Gastrocnemius medialis (tissue), 4 donors: ENCODE measurements at regions of chr11 and their contacts with region 1.

Region 1: DNA sequence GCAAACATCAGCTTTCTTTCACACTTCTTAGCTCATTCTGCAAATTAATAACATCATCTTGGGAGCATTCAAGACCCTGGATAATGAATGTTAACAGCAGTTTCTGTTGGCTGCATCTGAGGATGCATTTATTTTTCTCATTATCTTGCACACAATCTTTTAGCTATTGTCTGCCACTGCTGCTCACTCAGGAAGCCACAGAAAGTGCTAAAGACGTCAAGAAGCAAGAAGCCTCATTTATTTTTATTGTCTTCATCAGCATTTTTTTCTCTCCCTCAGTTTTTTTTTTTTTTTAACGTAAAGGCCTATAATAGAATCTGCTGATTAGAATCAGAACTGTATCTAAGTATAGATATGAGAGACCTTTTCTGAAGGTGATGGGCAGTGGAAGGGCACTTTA is 1339.4 kb downstream of the FAM181B start:
- DNase-seq: no peak
- ATAC-seq: no peak
- H3K4me3 ChIP-seq: no peak overlapping the region
- H3K27ac ChIP-seq: no peak overlapping the region
- H3K4me1 ChIP-seq: no peaks in the 10 kb centered on the region
- H3K27me3 ChIP-seq: no peaks in the 10 kb centered on the region
- CTCF ChIP-seq: no peak
- POLR2A ChIP-seq: no peak

Region 2: GRCh38 chr11:81080476-81080875 is 313.8 kb before region 1 on chr11:
- in situ Hi-C with region 1: no loop called
- intact Hi-C with region 1: no loop called
- DNase-seq: no peak
- ATAC-seq: no peak
- H3K4me3 ChIP-seq: no peak overlapping the region
- H3K27ac ChIP-seq: no peak overlapping the region
- H3K4me1 ChIP-seq: no peaks in the 10 kb centered on the region
- H3K27me3 ChIP-seq: no peaks in the 10 kb centered on the region
- CTCF ChIP-seq: no peak
- POLR2A ChIP-seq: no peak

Region 3: DNA sequence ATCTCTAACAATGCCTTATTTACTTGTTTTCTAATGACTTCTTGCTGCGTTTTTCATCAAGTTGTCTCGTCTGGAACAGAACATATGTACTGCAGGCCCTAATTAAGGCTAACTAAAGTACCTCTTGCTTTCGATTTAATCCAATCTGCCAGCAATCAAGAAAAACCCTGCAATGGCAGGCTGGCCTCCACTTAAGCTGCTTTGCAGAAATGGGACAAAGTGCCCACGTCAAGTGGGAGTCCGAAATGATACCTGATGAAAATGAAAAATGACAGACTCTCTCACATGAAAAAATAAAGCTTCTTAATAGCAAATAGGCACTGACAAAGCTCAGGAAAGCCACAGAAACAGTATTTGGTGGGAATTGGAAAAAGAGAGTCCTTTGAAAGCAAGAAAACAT is 115.3 kb before region 1 on chr11:
- in situ Hi-C with region 1: no loop called
- intact Hi-C with region 1: no loop called
- DNase-seq: no peak
- ATAC-seq: no peak
- H3K4me3 ChIP-seq: no peak overlapping the region
- H3K27ac ChIP-seq: no peak overlapping the region
- H3K4me1 ChIP-seq: no peaks in the 10 kb centered on the region
- H3K27me3 ChIP-seq: no peaks in the 10 kb centered on the region
- CTCF ChIP-seq: no peak
- POLR2A ChIP-seq: no peak

Region 4: GRCh38 chr11:81359476-81359875 is 34.8 kb before region 1 on chr11:
- in situ Hi-C with region 1: no loop called
- intact Hi-C with region 1: no loop called
- DNase-seq: no peak
- ATAC-seq: no peak
- H3K4me3 ChIP-seq: no peak overlapping the region
- H3K27ac ChIP-seq: no peak overlapping the region
- H3K4me1 ChIP-seq: no peaks in the 10 kb centered on the region
- H3K27me3 ChIP-seq: no peaks in the 10 kb centered on the region
- CTCF ChIP-seq: no peak
- POLR2A ChIP-seq: no peak

Region 5: DNA sequence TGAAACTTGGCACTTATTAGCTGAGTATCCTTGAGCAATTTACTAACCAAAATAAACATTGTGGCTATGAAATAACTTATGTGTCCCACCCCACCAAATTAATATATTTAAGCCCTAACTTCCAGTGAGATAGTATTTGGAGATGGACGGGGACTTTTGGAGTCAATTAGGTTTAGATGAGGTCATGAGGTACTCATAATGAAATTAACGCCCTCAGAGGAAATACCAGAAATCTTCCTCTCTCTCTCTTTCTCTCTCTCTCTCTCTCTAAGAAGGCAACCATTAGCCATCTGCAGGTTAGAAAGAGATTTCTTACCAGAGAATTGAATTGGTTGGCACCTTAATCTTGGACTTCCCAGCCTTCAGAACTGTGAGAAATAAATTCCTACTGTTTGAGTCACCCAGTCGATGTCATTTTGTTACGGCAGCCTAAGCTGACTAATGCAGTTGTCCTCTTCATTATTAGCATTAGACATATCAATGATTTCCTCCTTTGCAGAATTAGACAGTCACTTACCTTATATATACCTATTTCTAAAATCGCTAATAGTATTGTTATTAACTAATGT is 55.4 kb after region 1 on chr11:
- in situ Hi-C with region 1: loop called in 1 of 4 experiments (anchors 10 kb)
- intact Hi-C with region 1: no loop called
- DNase-seq: no peak
- ATAC-seq: no peak
- H3K4me3 ChIP-seq: no peak overlapping the region
- H3K27ac ChIP-seq: no peak overlapping the region
- H3K4me1 ChIP-seq: no peaks in the 10 kb centered on the region
- H3K27me3 ChIP-seq: no peaks in the 10 kb centered on the region
- CTCF ChIP-seq: no peak
- POLR2A ChIP-seq: no peak

Region 6: DNA sequence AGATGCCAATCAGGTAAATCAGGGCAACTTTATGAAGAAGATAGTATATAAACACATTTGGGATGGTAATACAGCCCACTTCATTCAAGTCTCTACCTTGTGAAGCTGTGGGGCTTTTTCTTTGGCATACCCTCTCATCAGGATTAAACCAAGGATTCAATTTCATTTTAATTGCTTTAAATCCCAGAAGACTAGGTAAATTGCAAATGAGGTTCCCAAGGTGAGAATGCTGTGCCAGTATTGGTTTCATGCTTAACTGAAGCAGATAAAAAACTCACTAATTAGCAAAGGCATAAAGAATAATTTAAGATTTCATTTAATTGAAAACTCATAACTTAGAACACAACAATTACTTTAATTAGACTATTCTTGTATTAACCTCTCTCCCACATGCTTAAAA is 121.3 kb after region 1 on chr11:
- in situ Hi-C with region 1: no loop called
- intact Hi-C with region 1: no loop called
- DNase-seq: no peak
- ATAC-seq: no peak
- H3K4me3 ChIP-seq: no peak overlapping the region
- H3K27ac ChIP-seq: no peak overlapping the region
- H3K4me1 ChIP-seq: no peaks in the 10 kb centered on the region
- H3K27me3 ChIP-seq: no peaks in the 10 kb centered on the region
- CTCF ChIP-seq: no peak
- POLR2A ChIP-seq: no peak